CD4-positive, alpha-beta memory T cell (primary cell): ENCODE measurements at regions of chr7 and their contacts with region 1.

Region 1: GRCh38 chr7:99990460-99990852 is 14.6 kb upstream of the AZGP1 start:
- DNase-seq: peak in 1 of 5 donors; percentile 2
- H3K4me3 ChIP-seq: no peak overlapping the region
- H3K4me3 Mint-ChIP-seq: no peak overlapping the region
- H3K27ac ChIP-seq: no peak overlapping the region
- H3K27ac Mint-ChIP-seq: no peak overlapping the region
- H3K4me1 ChIP-seq: peaks cover 3% of the 10 kb centered on the region
- H3K4me1 Mint-ChIP-seq: peaks cover 0 to 6% (median 4%) of the 10 kb centered on the region in 4 donors
- H3K27me3 ChIP-seq: no peaks in the 10 kb centered on the region
- H3K27me3 Mint-ChIP-seq: peaks cover 2 to 5% of the 10 kb centered on the region in 2 donors

Region 2: DNA sequence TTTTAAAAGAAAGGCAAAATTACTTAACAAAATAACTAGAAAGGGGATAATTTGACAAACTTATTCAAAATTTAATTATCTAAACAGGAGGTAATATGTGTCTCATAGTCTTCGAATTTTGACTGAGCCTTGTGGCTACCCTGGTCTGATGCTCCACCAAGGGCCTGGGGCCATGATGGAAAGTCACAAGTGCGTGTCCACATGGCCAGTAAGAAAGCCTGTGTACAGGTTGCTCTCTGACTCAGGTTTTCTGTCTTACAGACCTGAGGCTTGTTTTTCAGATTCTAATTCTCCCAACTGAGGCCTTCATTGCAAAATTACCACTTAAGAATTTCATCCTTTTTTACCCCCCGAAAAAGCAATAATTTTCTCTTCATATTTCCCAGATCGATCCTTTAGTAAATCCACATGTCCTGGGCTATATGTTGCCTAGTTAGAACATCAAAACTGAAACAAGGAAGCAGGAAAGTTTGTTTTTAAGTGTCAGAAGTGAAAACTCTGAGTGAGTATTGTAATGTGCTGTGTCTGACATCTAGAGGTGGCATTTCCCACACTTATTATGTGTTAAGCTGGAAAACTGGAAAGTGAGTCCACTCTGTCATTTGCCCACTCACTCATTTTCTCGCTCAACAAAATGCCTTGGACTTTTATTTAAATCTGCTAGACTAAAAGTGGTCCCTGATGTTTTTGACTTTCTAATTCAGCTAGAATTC is 152.7 kb before region 1 on chr7:
- CTCF ChIA-PET with region 1: no interaction called
- POLR2A ChIA-PET with region 1: no interaction called
- intact Hi-C with region 1: no loop called
- DNase-seq: no peak
- H3K4me3 ChIP-seq: no peak overlapping the region
- H3K4me3 Mint-ChIP-seq: no peak overlapping the region
- H3K27ac ChIP-seq: no peak overlapping the region
- H3K27ac Mint-ChIP-seq: peak overlapping the region in 1 of 7 donors; percentile 56
- H3K4me1 ChIP-seq: no peaks in the 10 kb centered on the region
- H3K4me1 Mint-ChIP-seq: peaks cover 0 to 1% (median 0%) of the 10 kb centered on the region in 4 donors
- H3K27me3 ChIP-seq: no peaks in the 10 kb centered on the region
- H3K27me3 Mint-ChIP-seq: peaks cover 0 to 9% of the 10 kb centered on the region in 2 donors

Region 3: DNA sequence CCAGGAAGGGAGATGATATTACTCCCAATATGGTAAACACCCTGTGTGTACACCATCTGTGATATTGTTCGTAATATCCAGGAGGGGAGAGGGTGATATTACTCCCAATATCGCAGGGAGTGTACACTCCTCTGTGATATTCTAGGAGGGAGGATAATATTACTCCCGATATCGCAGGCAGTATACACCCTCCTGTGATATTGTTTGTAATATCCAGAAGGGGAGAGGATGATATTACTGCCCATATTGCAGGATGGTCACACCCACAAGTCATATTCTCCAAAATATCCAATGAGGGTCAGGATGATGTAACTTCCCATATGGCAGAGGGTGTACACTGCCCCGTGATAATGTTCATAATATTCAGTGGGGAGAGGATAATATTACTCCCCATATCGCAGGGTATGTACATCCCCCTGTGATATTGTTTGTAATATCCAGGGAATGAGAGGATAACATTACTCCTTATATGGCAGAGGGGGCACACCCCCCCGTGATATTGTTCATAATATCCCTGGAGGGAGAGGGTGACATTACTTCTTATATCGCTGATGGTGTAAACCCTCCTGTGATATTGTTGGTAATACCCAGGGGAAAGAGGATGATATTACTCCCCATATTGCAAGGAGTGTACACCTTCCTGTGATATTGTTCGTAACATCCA is 31.8 kb before region 1 on chr7:
- CTCF ChIA-PET with region 1: no interaction called
- POLR2A ChIA-PET with region 1: no interaction called
- intact Hi-C with region 1: no loop called
- DNase-seq: no peak
- H3K4me3 ChIP-seq: no peak overlapping the region
- H3K4me3 Mint-ChIP-seq: no peak overlapping the region
- H3K27ac ChIP-seq: no peak overlapping the region
- H3K27ac Mint-ChIP-seq: no peak overlapping the region
- H3K4me1 ChIP-seq: no peaks in the 10 kb centered on the region
- H3K4me1 Mint-ChIP-seq: no peaks in the 10 kb centered on the region
- H3K27me3 ChIP-seq: peaks cover 11% of the 10 kb centered on the region
- H3K27me3 Mint-ChIP-seq: peaks cover 17 to 43% of the 10 kb centered on the region in 2 donors

Region 4: DNA sequence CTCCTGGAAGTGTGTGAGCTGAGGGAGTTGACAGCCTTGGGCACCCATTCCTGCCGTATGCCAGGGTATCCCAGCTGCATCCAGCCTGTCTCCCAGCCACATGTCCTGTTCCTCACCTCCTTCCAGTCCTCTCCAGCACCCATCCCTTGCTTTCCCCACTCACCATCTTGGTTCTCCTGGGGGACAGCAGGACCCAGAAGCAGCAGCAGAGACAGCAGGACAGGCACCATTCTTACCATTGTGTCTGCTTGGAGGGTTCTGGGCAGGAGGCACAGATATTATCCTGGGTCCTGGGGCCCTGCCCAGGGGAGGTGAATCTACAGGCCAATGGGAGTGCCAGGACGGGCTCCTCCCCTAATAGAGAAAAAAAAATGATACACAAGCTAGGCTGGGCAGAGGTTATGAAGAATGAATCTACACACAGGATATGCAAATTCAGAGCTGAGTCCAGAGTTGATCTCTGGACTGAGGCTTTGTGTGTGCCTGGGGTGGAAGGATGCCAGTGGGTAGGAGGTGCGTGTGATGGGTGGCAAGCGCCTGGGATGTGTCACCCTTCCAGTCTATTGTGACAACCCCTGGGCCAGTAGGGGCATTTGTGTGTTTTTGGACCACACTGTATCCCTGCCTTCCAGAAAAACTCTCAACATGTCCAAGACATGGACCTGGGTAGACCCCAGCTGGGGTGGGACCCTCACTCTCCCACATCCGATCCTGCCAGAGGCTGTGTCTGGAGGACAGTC is 14.5 kb before region 1 on chr7 and contains the start of gene AZGP1:
- CTCF ChIA-PET with region 1: interaction called, 48 read pairs
- POLR2A ChIA-PET with region 1: no interaction called
- intact Hi-C with region 1: no loop called
- DNase-seq: no peak
- H3K4me3 ChIP-seq: no peak within 1 kb of the TSS
- H3K4me3 Mint-ChIP-seq: no peak within 1 kb of the TSS
- H3K27ac ChIP-seq: no peak within 1 kb of the TSS
- H3K27ac Mint-ChIP-seq: no peak within 1 kb of the TSS
- H3K4me1 ChIP-seq: no peaks in the 10 kb centered on the region
- H3K4me1 Mint-ChIP-seq: peaks cover 0 to 2% (median 0%) of the 10 kb centered on the region in 4 donors
- H3K27me3 ChIP-seq: no peaks in the 10 kb centered on the region
- H3K27me3 Mint-ChIP-seq: peaks cover 9 to 16% of the 10 kb centered on the region in 2 donors
- total RNA-seq, gene AZGP1: not detected